ENCODE measurements at regions of chr12 and their contacts with region 1.

Region 1: GRCh38 chr12:114508529-114509129 is 102.7 kb upstream of the TBX5 start:
- DNase-seq: peak; percentile 75

Region 2: GRCh38 chr12:113980537-113981337 is 527.9 kb before region 1 on chr12:
- CTCF ChIA-PET with region 1: interaction called, 11 read pairs
- POLR2A ChIA-PET with region 1: no interaction called
- DNase-seq: peak; percentile 61

Region 3: GRCh38 chr12:114166362-114166761 is 342.3 kb before region 1 on chr12:
- CTCF ChIA-PET with region 1: interaction called, 20 read pairs
- POLR2A ChIA-PET with region 1: no interaction called
- DNase-seq: peak; percentile 55

Measured in HEK293T (cell line).